ENCODE measurements at regions of chr1 and their contacts with region 1.

Region 1: GRCh38 chr1:11805447-11806306 is at the starts of genes CLCN6 and MTHFR:
- DNase-seq: peak; percentile 98 to 99
- H3K4me3 ChIP-seq: peak within 1 kb of the TSS; percentile 85
- H3K27ac ChIP-seq: peak within 1 kb of the TSS; percentile 97 to 99
- H3K4me1 ChIP-seq: peaks cover 11 to 26% of the 10 kb centered on the region in 2 donors
- H3K27me3 ChIP-seq: no peaks in the 10 kb centered on the region
- CTCF ChIP-seq: no peak
- total RNA-seq, gene CLCN6: 18.6 TPM
- total RNA-seq, gene MTHFR: 48.4 TPM

Region 2: GRCh38 chr1:11650331-11650991 is 155.2 kb before region 1 on chr1:
- intact Hi-C with region 1: loop called (anchors 5 kb)
- DNase-seq: peak; percentile 43 to 88
- H3K4me3 ChIP-seq: peak overlapping the region in 1 of 2 donors; percentile 47
- H3K27ac ChIP-seq: no peak overlapping the region
- H3K4me1 ChIP-seq: peaks cover 11 to 12% of the 10 kb centered on the region in 2 donors
- H3K27me3 ChIP-seq: no peaks in the 10 kb centered on the region
- CTCF ChIP-seq: peak; percentile 67 to 84 (median 78)

Region 3: DNA sequence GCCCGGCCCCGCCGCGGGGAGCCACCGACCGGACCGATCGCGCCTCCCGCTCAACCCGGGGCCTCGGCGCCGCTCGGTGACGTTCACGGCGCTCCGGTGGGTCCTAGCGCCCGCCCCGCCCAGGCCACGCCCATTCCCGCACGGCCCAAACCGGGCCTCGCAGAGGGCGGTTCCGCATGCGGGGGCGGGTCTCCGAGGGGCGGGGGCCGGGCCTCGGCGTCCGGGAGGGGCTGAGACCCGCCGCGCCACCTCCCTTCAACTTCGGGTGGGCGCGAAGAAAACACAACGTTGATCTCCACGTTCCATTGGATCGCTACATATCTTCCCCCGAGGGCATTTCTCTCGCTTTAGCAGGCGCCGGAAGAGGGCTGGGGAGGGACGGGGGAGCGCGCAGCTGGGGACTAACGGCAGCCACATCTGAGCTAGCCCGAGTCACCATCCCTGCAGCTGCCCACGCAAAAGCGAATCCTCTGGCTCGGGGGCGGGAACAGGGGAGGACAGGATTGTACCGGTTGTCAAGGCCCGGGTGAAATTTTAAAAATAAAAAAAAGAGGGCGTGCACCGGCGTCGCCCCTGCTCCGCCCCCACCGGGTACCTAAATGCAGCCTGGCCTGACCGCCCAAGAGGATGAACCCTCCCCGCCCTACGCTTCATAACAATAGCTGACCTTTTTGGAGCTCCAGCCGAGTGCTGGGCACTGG is 124.5 kb before region 1 on chr1 and contains the start of gene MAD2L2:
- intact Hi-C with region 1: loop called (anchors 2 kb)
- DNase-seq: peak; percentile 37 to 91
- H3K4me3 ChIP-seq: peak within 1 kb of the TSS; percentile 81 to 90
- H3K27ac ChIP-seq: peak within 1 kb of the TSS; percentile 68 to 89
- H3K4me1 ChIP-seq: peaks cover 0 to 5% of the 10 kb centered on the region in 2 donors
- H3K27me3 ChIP-seq: no peaks in the 10 kb centered on the region
- CTCF ChIP-seq: peak in 1 of 3 experiments; percentile 1
- total RNA-seq, gene MAD2L2: 18.3 TPM

Region 4: GRCh38 chr1:11735854-11736745 is 69.6 kb before region 1 on chr1 and contains the start of gene AGTRAP:
- intact Hi-C with region 1: loop called (anchors 1 kb)
- DNase-seq: peak; percentile 81 to 97
- H3K4me3 ChIP-seq: peak within 1 kb of the TSS; percentile 72 to 83
- H3K27ac ChIP-seq: peak within 1 kb of the TSS; percentile 73 to 90
- H3K4me1 ChIP-seq: peaks cover 3 to 18% of the 10 kb centered on the region in 2 donors
- H3K27me3 ChIP-seq: no peaks in the 10 kb centered on the region
- CTCF ChIP-seq: no peak
- total RNA-seq, gene AGTRAP: 95.6 TPM

Region 5: DNA sequence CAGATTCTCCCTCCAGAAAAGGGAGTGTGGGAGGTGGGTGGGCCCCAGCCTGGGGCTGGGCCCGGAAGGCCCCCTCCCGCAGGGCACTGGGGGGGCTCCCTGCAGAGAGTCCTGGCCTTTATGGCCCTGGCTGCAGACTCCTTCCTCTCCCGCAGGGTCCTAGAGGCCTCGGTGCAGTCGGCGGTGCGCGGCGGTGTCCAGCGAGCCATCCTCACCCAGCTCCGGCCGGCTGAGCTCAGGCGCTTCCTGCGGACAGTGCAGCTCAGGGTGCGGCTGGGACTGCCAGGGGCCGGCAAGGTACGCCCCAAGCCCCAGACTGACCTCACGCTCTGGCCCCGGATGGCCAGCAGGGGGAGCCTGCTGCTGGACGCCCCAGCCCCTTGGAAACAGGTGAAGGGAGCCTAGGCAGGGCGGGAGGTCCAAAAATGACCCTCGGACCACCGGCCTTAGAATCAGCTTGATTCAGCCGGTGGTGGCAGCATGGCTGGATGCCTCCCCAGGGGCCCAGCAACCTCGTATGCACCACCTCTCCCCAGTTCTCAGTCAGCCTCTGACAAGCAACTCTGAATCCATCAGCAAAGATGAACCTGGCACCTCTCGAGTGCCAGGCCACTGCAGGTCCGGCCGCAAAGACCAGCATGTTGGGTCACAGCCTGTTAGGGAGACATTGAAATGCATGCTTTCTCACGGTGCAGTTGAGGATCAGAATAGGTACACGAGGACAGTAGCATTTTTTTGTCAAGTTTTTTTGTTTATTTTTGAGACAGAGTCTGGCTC is 20.5 kb before region 1 on chr1:
- intact Hi-C with region 1: loop called (anchors 1 kb)
- DNase-seq: peak in 1 of 2 donors; percentile 82
- H3K4me3 ChIP-seq: peak overlapping the region in 1 of 2 donors; percentile 53
- H3K27ac ChIP-seq: peak overlapping the region; percentile 51 to 56
- H3K4me1 ChIP-seq: peaks cover 17 to 48% of the 10 kb centered on the region in 2 donors
- H3K27me3 ChIP-seq: no peaks in the 10 kb centered on the region
- CTCF ChIP-seq: peak; percentile 86 to 94 (median 92)

Region 6: DNA sequence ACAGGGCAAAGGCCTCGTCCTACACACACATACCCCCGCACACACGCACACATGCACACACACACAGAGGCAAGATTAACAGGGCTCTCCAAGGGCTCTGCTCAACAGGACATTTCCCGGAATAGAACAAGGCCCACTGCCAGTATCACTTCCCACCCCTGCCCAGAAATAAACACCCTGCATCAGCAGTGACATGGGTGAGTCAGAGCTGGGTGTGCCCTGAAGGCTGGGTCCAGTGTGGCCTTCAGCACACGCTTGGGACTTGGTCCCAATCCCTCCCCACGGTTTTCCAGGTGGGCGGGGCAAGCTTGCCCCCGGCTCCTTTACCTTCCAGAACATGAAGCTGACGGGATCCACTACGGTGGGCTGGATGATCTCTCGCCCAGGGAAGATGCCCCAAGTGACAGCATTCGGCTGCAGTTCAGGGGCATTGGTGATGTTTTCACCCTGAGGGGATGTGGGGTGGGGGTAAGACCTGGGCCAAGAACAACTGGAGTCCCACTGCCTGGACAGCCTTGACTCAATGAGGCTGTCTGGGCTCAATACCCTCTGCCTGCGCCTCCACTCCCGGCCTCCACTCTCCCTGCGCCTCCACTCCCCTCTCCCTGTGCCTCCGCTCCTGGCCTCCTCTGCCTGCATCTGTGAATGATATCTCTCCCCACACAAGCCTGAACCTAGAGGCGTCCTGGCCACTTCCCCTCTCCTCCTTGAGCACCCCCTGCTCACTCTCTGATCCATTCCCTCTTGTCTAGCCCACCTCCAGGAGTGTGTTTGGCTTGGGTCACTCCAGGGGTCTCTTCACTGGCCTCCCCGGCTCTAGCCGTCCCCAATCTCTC is 14.6 kb before region 1 on chr1:
- intact Hi-C with region 1: loop called (anchors 1 kb)
- DNase-seq: peak; percentile 89 to 98
- H3K4me3 ChIP-seq: peak overlapping the region in 1 of 2 donors; percentile 23
- H3K27ac ChIP-seq: peak overlapping the region; percentile 88 to 91
- H3K4me1 ChIP-seq: peaks cover 26 to 51% of the 10 kb centered on the region in 2 donors
- H3K27me3 ChIP-seq: no peaks in the 10 kb centered on the region
- CTCF ChIP-seq: no peak

Region 7: GRCh38 chr1:11979851-11980675 is 174.4 kb after region 1 on chr1 and contains the start of gene MFN2:
- intact Hi-C with region 1: loop called (anchors 1 kb)
- DNase-seq: peak; percentile 87 to 97
- H3K4me3 ChIP-seq: peak within 1 kb of the TSS; percentile 91 to 92
- H3K27ac ChIP-seq: peak within 1 kb of the TSS; percentile 89 to 95
- H3K4me1 ChIP-seq: peaks cover 0 to 11% of the 10 kb centered on the region in 2 donors
- H3K27me3 ChIP-seq: no peaks in the 10 kb centered on the region
- CTCF ChIP-seq: no peak
- total RNA-seq, gene MFN2: 85.6 TPM

Region 8: DNA sequence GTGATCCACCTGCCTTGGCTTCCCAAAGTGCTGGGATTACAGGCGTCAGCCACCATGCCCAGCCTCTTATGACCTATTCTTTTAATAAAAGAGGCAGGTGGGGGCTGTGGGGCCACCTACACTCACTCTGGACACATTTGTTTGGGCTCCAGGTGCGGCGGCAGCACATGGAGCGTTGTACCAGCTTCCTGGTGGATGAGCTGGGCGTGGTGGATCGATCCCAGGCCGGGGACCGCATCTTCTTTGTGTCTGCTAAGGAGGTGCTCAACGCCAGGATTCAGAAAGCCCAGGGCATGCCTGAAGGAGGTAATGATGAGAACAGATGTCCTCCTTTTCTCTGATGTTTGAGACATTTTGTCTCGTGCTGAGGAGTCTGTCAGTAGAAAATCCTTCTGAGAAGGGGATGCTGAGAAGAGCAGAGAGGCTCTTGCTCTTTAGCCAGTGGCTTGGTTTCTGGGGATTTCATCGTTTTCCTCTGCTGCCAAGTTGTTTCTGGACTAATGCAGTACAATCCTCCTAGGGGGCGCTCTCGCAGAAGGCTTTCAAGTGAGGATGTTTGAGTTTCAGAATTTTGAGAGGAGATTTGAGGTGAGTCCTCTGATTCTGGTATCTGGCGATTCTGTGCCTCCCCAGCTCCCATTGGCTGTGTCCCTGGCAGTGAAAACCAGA is 195.7 kb after region 1 on chr1:
- intact Hi-C with region 1: no loop called
- DNase-seq: no peak
- H3K4me3 ChIP-seq: no peak overlapping the region
- H3K27ac ChIP-seq: no peak overlapping the region
- H3K4me1 ChIP-seq: no peaks in the 10 kb centered on the region
- H3K27me3 ChIP-seq: no peaks in the 10 kb centered on the region
- CTCF ChIP-seq: peak in 1 of 3 experiments; percentile 41